Mammary epithelial cell (primary cell): ENCODE measurements at regions of chr15 and their contacts with region 1.

Region 1: GRCh38 chr15:67777773-67778172 is 47.5 kb upstream of the SKOR1 start:
- DNase-seq: no peak
- H3K4me3 ChIP-seq: no peak overlapping the region
- H3K27ac ChIP-seq: no peak overlapping the region
- H3K4me1 ChIP-seq: no peaks in the 10 kb centered on the region
- H3K27me3 ChIP-seq: no peaks in the 10 kb centered on the region
- CTCF ChIP-seq: no peak

Region 2: DNA sequence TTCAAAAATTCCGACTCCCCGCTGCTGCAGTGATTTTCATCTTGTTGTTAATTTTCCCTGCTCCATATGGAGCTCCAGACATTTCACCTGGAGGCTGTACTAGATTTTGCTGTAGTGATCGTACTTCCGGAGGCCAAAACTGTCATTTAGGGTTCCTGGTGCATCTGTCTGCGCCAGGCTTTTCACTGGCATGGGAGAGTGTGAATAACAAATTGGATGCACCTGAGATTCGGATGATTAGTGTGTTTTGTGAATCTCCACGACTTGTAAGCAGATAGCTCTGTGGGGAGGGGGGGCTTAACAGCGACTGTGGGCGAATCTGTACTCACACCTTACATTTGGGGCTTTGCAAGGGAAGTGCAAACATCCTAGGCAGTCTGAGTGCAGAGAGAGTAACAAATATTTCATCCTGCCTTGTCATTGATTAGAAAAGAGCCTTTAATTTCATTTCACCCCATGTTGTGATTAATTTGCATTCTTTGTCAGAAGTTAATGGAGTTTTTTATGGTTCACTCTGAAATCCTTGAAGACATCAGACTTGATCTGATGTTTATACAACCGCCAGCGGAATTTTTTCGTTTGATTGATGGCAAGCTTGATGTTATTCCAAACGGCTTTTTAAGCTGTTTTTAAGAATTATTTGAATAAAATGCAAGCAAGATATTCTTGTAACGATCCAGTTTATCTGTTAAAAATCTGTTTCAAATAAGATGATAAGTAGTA is 44.9 kb before region 1 on chr15:
- CTCF ChIA-PET with region 1: no interaction called
- dilution Hi-C with region 1: no loop called
- in situ Hi-C with region 1: no loop called
- intact Hi-C with region 1: loop called (anchors 1 kb)
- DNase-seq: no peak
- H3K4me3 ChIP-seq: no peak overlapping the region
- H3K27ac ChIP-seq: no peak overlapping the region
- H3K4me1 ChIP-seq: peaks cover 4% of the 10 kb centered on the region
- H3K27me3 ChIP-seq: no peaks in the 10 kb centered on the region
- CTCF ChIP-seq: no peak